ENCODE measurements at regions of chr16 and their contacts with region 1.

Region 1: DNA sequence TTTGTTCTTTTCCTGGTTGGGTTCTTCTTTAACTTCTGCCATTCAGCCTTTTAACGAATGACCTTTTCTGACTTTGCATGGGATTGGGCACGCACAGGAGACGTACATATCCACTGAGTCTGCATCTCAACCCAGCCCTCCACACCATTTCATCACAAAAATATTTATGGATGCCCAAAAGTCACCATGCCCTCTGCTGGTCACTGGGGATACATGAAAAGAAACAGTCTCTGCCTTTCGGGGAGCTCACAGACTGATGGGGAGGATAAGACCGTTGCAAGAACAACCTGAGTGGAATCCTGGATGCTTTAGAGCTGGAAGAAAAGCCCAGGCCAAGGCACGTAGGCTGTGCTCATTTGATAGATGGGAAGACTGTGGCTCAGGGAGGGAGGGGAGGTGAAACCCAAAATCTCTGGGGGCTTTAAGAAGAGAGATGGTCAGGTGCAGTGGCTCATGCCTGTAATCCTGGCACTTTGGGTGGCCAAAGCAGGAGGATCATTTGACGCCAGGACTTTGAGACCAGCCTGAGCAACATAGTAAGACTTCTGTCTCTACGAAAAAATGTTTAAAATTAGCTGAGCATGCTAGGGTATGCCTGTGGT is 7.9 kb upstream of the MT2A start:
- DNase-seq: peak in 6 of 7 donors; percentile 55 to 78 (median 68)
- H3K4me3 ChIP-seq: no peak overlapping the region
- H3K27ac ChIP-seq: no peak overlapping the region
- H3K4me1 ChIP-seq: peaks cover 0 to 2% of the 10 kb centered on the region in 2 donors
- H3K27me3 ChIP-seq: no peaks in the 10 kb centered on the region
- CTCF ChIP-seq: peak; percentile 52 to 81 (median 74)
- POLR2A ChIP-seq: no peak

Region 2: GRCh38 chr16:56519459-56520250 is 80.8 kb before region 1 on chr16 and contains the start of gene BBS2:
- intact Hi-C with region 1: loop called in 1 of 2 experiments (anchors 5 kb)
- DNase-seq: peak; percentile 89 to 95 (median 92)
- H3K4me3 ChIP-seq: peak within 1 kb of the TSS; percentile 24 to 96 (median 95)
- H3K27ac ChIP-seq: peak within 1 kb of the TSS; percentile 78 to 97 (median 90)
- H3K4me1 ChIP-seq: peaks cover 18 to 50% of the 10 kb centered on the region in 2 donors
- H3K27me3 ChIP-seq: no peaks in the 10 kb centered on the region
- CTCF ChIP-seq: peak in 4 of 6 experiments; percentile 18 to 43 (median 32)
- POLR2A ChIP-seq: peak; percentile 90 to 94
- total RNA-seq, gene BBS2: 115 to 329 (median 167) TPM

Region 3: DNA sequence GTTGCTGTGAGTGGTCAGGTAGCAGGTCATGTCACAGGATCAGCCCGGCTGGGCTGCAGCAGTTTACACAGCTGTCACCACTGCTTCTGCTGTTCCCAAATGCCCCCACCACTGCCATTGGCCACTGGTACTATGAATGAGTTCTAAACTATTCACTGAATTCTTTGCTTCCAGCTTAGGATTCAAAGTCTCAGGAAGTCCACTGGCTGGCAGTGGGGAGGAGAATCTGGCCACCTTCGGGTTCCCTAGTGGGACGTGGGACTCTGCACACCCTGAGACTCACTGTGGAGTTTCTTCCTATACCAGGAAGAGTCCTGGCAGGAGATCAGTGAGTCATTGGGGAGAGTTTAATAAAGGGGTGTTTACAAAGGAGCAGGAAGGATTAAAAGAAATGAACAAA is 88.7 kb after region 1 on chr16:
- intact Hi-C with region 1: loop called in 1 of 2 experiments (anchors 5 kb)
- DNase-seq: no peak
- H3K4me3 ChIP-seq: no peak overlapping the region
- H3K27ac ChIP-seq: no peak overlapping the region
- H3K4me1 ChIP-seq: no peaks in the 10 kb centered on the region
- H3K27me3 ChIP-seq: no peaks in the 10 kb centered on the region
- CTCF ChIP-seq: no peak
- POLR2A ChIP-seq: no peak

Region 4: GRCh38 chr16:56700195-56700594 is 99.7 kb after region 1 on chr16:
- intact Hi-C with region 1: loop called (anchors 5 to 10 kb)
- DNase-seq: no peak
- H3K4me3 ChIP-seq: no peak overlapping the region
- H3K27ac ChIP-seq: no peak overlapping the region
- H3K4me1 ChIP-seq: peaks cover 0 to 7% of the 10 kb centered on the region in 2 donors
- H3K27me3 ChIP-seq: no peaks in the 10 kb centered on the region
- CTCF ChIP-seq: no peak
- POLR2A ChIP-seq: no peak

Measured in adrenal gland (tissue), 19 donors.